ENCODE measurements at regions of chr17 and their contacts with region 1.

Region 1: DNA sequence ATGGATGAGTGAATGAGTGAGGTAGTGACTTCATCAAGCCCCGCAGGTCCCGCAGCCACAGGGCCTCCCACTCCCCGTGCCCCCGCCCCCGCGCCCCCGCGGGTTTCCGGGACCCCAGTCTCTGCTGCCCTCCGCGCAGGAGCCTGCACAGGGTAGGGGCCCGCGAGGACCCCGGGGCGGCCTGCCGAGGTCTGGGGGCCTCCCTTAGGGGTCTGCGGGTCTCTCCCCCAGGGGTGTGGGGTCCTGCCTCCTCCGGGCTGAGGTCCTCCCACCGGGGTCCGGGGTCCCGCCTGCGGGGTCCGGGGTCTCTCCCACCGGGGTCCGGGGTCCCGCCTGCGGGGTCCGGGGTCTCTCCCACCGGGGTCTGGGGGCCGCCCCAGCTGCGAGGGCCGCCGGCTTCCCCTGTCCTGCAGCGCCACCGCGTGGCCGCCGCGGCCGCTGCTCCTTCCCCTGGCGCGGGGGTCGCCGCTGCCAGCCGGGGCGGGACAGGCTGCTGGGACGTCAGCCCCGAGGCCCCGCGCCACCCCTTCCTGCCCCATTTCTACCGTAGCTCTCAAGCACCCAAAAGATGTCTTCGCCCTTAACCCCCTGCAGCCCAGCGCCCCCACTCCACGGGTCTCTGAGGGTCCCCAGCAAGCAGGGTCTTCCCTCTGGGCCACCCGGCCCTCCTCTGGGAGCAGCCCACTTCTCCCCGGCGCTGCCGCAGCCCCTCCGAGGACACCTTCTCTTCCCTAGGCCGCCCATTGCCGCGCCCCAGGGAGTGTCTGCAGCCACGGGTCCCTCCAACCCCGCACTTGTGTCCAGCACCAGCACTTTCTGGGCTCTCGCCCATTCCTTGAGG is 10.4 kb upstream of the CHMP6 start:
- DNase-seq: peak; percentile 24
- H3K4me3 Mint-ChIP-seq: no peak overlapping the region
- H3K27ac Mint-ChIP-seq: no peak overlapping the region
- H3K4me1 Mint-ChIP-seq: peaks cover 7% of the 10 kb centered on the region
- H3K27me3 Mint-ChIP-seq: peaks cover 4% of the 10 kb centered on the region

Region 2: GRCh38 chr17:80575057-80575875 is 406.0 kb before region 1 on chr17:
- intact Hi-C with region 1: loop called (anchors 10 kb)
- DNase-seq: peak; percentile 82
- H3K4me3 Mint-ChIP-seq: no peak overlapping the region
- H3K27ac Mint-ChIP-seq: no peak overlapping the region
- H3K4me1 Mint-ChIP-seq: peaks cover 24% of the 10 kb centered on the region
- H3K27me3 Mint-ChIP-seq: no peaks in the 10 kb centered on the region